K562 (cell line): ENCODE measurements at regions of chr11 and their contacts with region 1.

Region 1: GRCh38 chr11:6505577-6506240 is 8.6 kb downstream of the DNHD1 start:
- DNase-seq: peak; percentile 32 to 53 (median 34)
- ATAC-seq: peak; percentile 86
- H3K4me3 ChIP-seq: no peak overlapping the region
- H3K27ac ChIP-seq: no peak overlapping the region
- H3K4me1 ChIP-seq: no peaks in the 10 kb centered on the region
- H3K27me3 ChIP-seq: no peaks in the 10 kb centered on the region
- CTCF ChIP-seq: peak; percentile 61 to 78 (median 77); a peak in 5 of 6 replicates
- EP300 ChIP-seq: no peak
- POLR2A ChIP-seq: no peak
- RAD21 ChIP-seq: peak; percentile 46 to 69

Region 2: DNA sequence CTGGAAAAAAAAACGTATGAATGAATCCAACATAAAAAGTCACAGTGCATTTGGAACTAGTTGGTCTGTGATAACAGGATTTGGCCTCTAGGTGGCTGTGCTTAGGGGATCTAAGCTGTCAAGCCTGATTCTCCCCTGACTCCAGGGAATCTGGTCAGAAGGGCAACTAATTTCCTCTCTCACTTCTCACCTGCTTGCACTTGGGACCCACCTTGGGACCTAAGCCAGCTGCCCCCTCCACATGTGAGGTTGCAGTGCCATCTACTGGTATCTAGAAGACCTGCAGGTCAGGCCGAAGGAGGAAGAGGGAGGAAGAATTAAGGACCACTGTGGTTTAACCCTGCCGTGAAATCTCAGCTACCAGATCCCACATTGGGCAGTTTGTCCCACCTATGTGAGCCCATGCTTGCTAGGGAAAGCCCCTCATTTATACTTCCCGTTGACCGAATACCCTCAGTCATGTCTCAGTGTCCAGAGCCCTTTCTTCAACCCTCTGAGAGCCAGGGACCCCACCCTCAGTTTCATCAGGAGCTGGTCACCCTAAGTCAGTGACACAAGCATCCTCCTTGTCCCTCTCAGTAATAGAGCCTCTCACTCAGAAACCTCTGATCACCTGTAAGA is 152.2 kb before region 1 on chr11:
- CTCF ChIA-PET with region 1: no interaction called
- POLR2A ChIA-PET with region 1: no interaction called
- in situ Hi-C with region 1: no loop called
- intact Hi-C with region 1: no loop called
- DNase-seq: peak; percentile 61 to 71 (median 63)
- ATAC-seq: peak; percentile 89
- H3K4me3 ChIP-seq: no peak overlapping the region
- H3K27ac ChIP-seq: no peak overlapping the region
- H3K4me1 ChIP-seq: peaks cover 0 to 5% of the 10 kb centered on the region in 2 experiments; a peak in 2 of 5 replicates
- H3K27me3 ChIP-seq: peaks cover 0 to 9% of the 10 kb centered on the region in 2 experiments; a peak in 4 of 5 replicates
- CTCF ChIP-seq: peak; percentile 93 to 97 (median 94)
- EP300 ChIP-seq: no peak
- POLR2A ChIP-seq: no peak
- RAD21 ChIP-seq: peak; percentile 82 to 92

Region 3: DNA sequence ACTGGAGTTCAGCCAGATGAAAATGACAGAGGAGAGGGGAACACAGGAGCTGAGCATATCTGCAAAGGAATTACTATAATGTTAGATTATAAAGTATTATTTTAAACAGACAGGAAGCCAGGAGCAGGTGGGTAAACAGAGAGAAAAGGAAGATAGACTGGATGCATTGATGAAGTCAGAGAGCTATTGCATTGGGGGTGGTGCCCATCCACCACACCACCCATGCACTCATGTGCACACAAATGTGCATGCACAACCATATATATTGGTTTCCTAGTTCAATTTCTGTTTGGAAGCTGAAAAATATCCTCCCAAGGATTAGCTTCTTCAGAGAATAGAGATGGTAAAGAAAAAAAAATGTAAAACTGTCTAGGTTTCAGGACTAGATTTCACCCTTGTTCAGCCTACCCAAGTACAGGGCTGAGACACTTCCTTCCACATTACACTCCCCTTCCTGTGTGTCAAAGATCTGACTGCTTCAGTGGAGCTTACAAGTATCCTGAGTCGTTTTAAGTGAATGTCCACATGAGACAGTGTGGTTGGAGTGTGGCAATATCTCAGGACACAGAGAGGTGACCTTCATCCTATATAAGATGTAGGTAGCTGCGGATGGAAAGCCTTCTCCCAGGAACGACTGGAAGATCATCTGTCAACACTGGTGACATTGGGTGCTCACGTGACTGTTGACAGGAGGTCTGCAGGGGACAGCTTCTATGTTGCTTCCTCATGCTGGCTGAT is 127.6 kb before region 1 on chr11:
- CTCF ChIA-PET with region 1: interaction called, 12 read pairs
- POLR2A ChIA-PET with region 1: interaction called, 7 read pairs
- in situ Hi-C with region 1: no loop called
- intact Hi-C with region 1: loop called (anchors 1 kb)
- DNase-seq: no peak
- ATAC-seq: peak; percentile 62
- H3K4me3 ChIP-seq: no peak overlapping the region
- H3K27ac ChIP-seq: no peak overlapping the region
- H3K4me1 ChIP-seq: peaks cover 0 to 6% of the 10 kb centered on the region in 2 experiments; a peak in 2 of 5 replicates
- H3K27me3 ChIP-seq: peaks cover 15 to 23% of the 10 kb centered on the region in 2 experiments; a peak in 3 of 5 replicates
- CTCF ChIP-seq: no peak
- EP300 ChIP-seq: no peak
- POLR2A ChIP-seq: no peak
- RAD21 ChIP-seq: no peak